ENCODE measurements at regions of chr3 and their contacts with region 1.

Region 1: DNA sequence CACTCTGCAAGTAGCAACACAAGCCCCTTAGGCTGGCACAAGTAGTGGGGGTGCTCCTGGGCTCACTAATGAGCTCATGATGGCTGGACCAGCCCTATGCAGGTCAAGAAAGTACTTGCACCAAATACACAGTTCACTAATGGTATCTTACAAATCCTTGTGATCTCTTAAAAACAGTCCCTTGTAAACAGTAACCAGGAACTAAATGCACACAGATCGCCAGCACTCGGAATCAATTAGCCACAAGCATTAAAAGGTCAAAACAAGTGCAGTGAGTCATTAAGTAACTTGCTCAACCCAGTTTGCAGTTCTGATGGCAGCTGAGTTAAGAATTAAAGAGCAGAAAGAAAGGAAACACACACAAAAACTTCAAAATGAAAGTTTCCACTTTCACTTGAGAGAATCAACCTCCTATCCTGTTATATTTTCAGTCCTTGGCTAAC is 43.2 kb downstream of the ARHGEF3 start:
- DNase-seq: no peak
- ATAC-seq: no peak
- H3K4me3 ChIP-seq: no peak overlapping the region
- H3K27ac ChIP-seq: no peak overlapping the region
- H3K4me1 ChIP-seq: no peaks in the 10 kb centered on the region
- H3K27me3 ChIP-seq: no peaks in the 10 kb centered on the region
- CTCF ChIP-seq: no peak

Region 2: DNA sequence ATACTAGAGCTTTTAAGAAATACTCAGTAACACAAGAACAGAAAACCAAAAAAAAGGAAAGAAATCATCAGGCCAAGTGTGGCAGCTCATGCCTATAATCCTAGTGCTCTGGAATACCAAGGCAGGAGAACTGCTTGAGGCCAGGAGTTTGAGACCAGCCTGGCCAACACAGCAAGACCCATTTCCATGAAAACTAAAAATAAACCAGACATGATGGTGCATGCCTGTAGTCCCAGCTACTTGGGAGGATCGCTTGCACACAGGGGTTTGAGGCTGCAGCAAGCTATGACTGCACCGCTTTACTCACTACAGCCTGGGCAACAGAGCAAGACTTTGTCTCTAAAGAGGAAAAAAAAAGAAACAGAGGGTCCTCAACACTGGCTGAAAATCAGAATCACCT is 93.7 kb before region 1 on chr3:
- CTCF ChIA-PET with region 1: no interaction called
- POLR2A ChIA-PET with region 1: no interaction called
- in situ Hi-C with region 1: no loop called
- intact Hi-C with region 1: no loop called
- DNase-seq: no peak
- ATAC-seq: no peak
- H3K4me3 ChIP-seq: no peak overlapping the region
- H3K27ac ChIP-seq: no peak overlapping the region
- H3K4me1 ChIP-seq: no peaks in the 10 kb centered on the region
- H3K27me3 ChIP-seq: no peaks in the 10 kb centered on the region
- CTCF ChIP-seq: no peak

Region 3: DNA sequence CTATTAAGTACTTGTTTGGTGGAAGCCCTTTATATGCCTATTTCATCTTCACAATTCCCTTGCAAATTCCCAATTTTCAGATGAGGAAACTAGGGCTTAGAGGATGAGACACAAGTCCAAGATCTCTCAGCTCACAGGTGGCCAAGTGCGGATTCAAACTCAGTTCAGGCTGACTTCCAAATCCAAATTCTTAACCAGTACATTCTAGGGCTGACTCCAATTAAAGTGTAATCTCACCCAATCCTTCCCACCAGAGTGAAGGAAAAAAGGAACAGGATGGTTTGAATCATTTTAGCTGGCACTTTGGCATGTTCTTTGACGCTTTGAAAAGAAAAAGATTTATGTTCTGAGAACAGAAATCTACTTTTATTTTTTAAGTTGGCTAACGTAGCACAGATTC is 30.5 kb after region 1 on chr3:
- CTCF ChIA-PET with region 1: interaction called, 3 read pairs
- POLR2A ChIA-PET with region 1: interaction called, 10 read pairs
- in situ Hi-C with region 1: no loop called
- intact Hi-C with region 1: no loop called
- DNase-seq: no peak
- ATAC-seq: no peak
- H3K4me3 ChIP-seq: no peak overlapping the region
- H3K27ac ChIP-seq: no peak overlapping the region
- H3K4me1 ChIP-seq: peaks cover 2% of the 10 kb centered on the region
- H3K27me3 ChIP-seq: no peaks in the 10 kb centered on the region
- CTCF ChIP-seq: no peak

Region 4: GRCh38 chr3:56862352-56863074 is 104.0 kb after region 1 on chr3:
- CTCF ChIA-PET with region 1: no interaction called
- POLR2A ChIA-PET with region 1: no interaction called
- in situ Hi-C with region 1: no loop called
- intact Hi-C with region 1: no loop called
- DNase-seq: no peak
- ATAC-seq: peak; percentile 86
- H3K4me3 ChIP-seq: no peak overlapping the region
- H3K27ac ChIP-seq: peak overlapping the region; percentile 8; the same call in 1 of the 2 replicates
- H3K4me1 ChIP-seq: peaks cover 16% of the 10 kb centered on the region
- H3K27me3 ChIP-seq: no peaks in the 10 kb centered on the region
- CTCF ChIP-seq: no peak

Region 5: GRCh38 chr3:56939834-56940233 is 181.3 kb after region 1 on chr3:
- CTCF ChIA-PET with region 1: no interaction called
- POLR2A ChIA-PET with region 1: no interaction called
- in situ Hi-C with region 1: no loop called
- intact Hi-C with region 1: no loop called
- DNase-seq: no peak
- ATAC-seq: no peak
- H3K4me3 ChIP-seq: no peak overlapping the region
- H3K27ac ChIP-seq: no peak overlapping the region
- H3K4me1 ChIP-seq: no peaks in the 10 kb centered on the region
- H3K27me3 ChIP-seq: no peaks in the 10 kb centered on the region
- CTCF ChIP-seq: no peak

Region 6: DNA sequence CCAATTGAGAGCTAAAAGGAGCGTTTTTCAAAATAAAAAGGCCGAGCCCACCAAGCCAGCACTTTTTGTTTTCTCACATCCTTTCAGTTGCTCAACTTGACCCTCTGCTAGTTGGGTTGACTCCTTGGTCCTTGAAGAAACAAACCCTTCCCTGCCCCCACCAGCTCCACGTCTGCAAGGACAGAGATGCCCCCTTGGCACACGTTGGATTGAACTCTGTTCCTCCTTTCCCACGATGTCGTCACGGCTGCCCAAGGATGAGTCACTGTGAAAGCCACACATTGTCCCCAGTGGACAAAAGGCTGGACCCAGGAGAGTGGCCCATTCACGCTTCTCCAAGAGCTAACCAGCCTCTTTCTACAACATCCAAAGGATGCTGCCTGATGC is 258.9 kb after region 1 on chr3:
- CTCF ChIA-PET with region 1: no interaction called
- POLR2A ChIA-PET with region 1: no interaction called
- in situ Hi-C with region 1: no loop called
- intact Hi-C with region 1: no loop called
- DNase-seq: no peak
- ATAC-seq: no peak
- H3K4me3 ChIP-seq: no peak overlapping the region
- H3K27ac ChIP-seq: peak overlapping the region; percentile 12; the same call in 1 of the 2 replicates
- H3K4me1 ChIP-seq: peaks cover 7% of the 10 kb centered on the region
- H3K27me3 ChIP-seq: no peaks in the 10 kb centered on the region
- CTCF ChIP-seq: no peak